CD8-positive, alpha-beta T cell (primary cell): ENCODE measurements at regions of chr22 and their contacts with region 1.

Region 1: DNA sequence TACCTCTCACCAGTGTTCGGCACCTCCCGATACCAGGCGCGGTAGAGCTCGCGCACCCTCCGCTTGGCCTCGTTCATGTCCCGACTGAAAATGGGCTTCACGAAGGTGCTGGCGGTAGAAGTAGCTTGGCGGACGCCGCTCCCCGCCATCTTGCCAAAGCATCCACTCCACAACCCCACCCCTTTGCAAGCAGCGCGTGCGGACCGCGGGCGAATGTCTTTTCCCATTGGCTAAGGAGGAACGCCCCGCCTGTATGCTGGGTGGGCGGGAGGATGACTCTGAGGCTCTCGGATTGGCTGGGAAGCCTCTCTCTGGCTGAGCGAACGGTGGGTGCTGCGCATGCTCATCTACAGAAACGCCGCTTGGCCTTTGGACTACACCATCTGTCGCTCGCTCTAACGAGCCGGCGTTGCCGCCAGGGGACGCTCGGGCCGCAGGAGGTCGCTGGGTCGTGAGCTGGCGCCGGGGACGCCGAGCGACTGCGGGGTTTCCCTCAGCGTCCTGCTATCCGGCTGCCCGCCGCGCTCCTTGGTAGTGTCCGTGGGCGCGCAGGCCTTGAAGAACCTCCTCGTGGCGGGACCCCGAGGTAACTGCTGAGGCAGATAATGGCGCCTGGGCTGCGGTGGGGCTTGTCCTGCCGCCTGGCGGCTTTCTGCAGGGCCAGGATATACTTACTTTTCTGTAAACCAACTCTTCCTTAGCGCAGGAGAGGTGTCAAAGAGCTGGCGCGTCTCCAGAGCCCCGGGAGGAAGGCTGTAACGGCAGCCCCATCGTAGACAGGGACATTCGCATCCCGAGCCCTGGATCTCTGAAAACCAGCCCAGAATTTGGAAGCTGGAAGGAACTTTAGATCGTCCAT is at the start of gene NDUFA6:
- DNase-seq: peak; percentile 95 to 99 (median 97)
- ATAC-seq: peak; percentile 92
- H3K4me3 ChIP-seq: peak within 1 kb of the TSS; percentile 73 to 96
- H3K4me3 Mint-ChIP-seq: peak within 1 kb of the TSS; percentile 99
- H3K27ac ChIP-seq: peak within 1 kb of the TSS; percentile 94 to 95
- H3K27ac Mint-ChIP-seq: peak within 1 kb of the TSS; percentile 100
- H3K4me1 ChIP-seq: peaks cover 25% of the 10 kb centered on the region
- H3K4me1 Mint-ChIP-seq: peaks cover 43% of the 10 kb centered on the region
- H3K27me3 ChIP-seq: no peaks in the 10 kb centered on the region
- H3K27me3 Mint-ChIP-seq: no peaks in the 10 kb centered on the region
- CTCF ChIP-seq: peak; percentile 87
- total RNA-seq, gene NDUFA6: 55.5 to 59.7 TPM

Region 2: GRCh38 chr22:41998361-41999275 is 92.2 kb before region 1 on chr22 and contains the start of gene WBP2NL:
- CTCF ChIA-PET with region 1: no interaction called
- POLR2A ChIA-PET with region 1: no interaction called
- intact Hi-C with region 1: loop called in 1 of 2 experiments (anchors 2 kb)
- DNase-seq: peak; percentile 77 to 95 (median 88)
- ATAC-seq: peak; percentile 95
- H3K4me3 ChIP-seq: peak within 1 kb of the TSS; percentile 70 to 76
- H3K4me3 Mint-ChIP-seq: peak within 1 kb of the TSS; percentile 97
- H3K27ac ChIP-seq: peak within 1 kb of the TSS; percentile 43 to 60
- H3K27ac Mint-ChIP-seq: peak within 1 kb of the TSS; percentile 97
- H3K4me1 ChIP-seq: peaks cover 13% of the 10 kb centered on the region
- H3K4me1 Mint-ChIP-seq: peaks cover 16% of the 10 kb centered on the region
- H3K27me3 ChIP-seq: no peaks in the 10 kb centered on the region
- H3K27me3 Mint-ChIP-seq: peaks cover 4% of the 10 kb centered on the region
- CTCF ChIP-seq: no peak
- total RNA-seq, gene WBP2NL: 0.28 to 0.60 TPM

Region 3: GRCh38 chr22:42101199-42101598 is 10.4 kb after region 1 on chr22:
- CTCF ChIA-PET with region 1: interaction called, 10 read pairs
- POLR2A ChIA-PET with region 1: interaction called, 3 read pairs
- intact Hi-C with region 1: no loop called
- DNase-seq: no peak
- ATAC-seq: no peak
- H3K4me3 ChIP-seq: no peak overlapping the region
- H3K4me3 Mint-ChIP-seq: no peak overlapping the region
- H3K27ac ChIP-seq: no peak overlapping the region
- H3K27ac Mint-ChIP-seq: no peak overlapping the region
- H3K4me1 ChIP-seq: no peaks in the 10 kb centered on the region
- H3K4me1 Mint-ChIP-seq: peaks cover 3% of the 10 kb centered on the region
- H3K27me3 ChIP-seq: no peaks in the 10 kb centered on the region
- H3K27me3 Mint-ChIP-seq: no peaks in the 10 kb centered on the region
- CTCF ChIP-seq: no peak

Region 4: DNA sequence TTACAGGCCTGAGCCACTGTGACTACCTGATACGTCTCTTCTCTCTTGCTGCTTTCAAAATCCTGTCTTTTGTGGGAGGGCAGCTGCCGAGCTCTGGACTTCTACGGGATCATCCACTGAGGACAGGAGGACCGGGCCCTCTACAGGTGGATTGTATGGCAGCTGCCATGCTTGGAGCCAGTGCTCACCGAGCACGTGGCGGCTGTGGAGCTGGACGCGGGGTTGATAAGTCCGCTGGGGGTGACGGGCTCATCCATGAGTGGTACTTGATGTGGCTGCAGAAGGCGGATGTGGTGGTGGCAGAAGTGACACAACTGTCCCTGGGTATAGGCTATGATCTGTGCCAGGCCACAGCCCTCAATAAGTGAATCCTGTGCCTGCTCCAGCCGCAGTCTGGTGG is 41.6 kb after region 1 on chr22:
- CTCF ChIA-PET with region 1: no interaction called
- POLR2A ChIA-PET with region 1: no interaction called
- intact Hi-C with region 1: no loop called
- DNase-seq: no peak
- ATAC-seq: no peak
- H3K4me3 ChIP-seq: no peak overlapping the region
- H3K4me3 Mint-ChIP-seq: no peak overlapping the region
- H3K27ac ChIP-seq: no peak overlapping the region
- H3K27ac Mint-ChIP-seq: no peak overlapping the region
- H3K4me1 ChIP-seq: no peaks in the 10 kb centered on the region
- H3K4me1 Mint-ChIP-seq: no peaks in the 10 kb centered on the region
- H3K27me3 ChIP-seq: no peaks in the 10 kb centered on the region
- H3K27me3 Mint-ChIP-seq: no peaks in the 10 kb centered on the region
- CTCF ChIP-seq: no peak

Region 5: GRCh38 chr22:42169055-42169469 is 78.2 kb after region 1 on chr22:
- CTCF ChIA-PET with region 1: interaction called, 4 read pairs
- POLR2A ChIA-PET with region 1: interaction called, 4 read pairs
- intact Hi-C with region 1: loop called (anchors 2 to 5 kb)
- DNase-seq: peak; percentile 51 to 82 (median 74)
- ATAC-seq: peak; percentile 95
- H3K4me3 ChIP-seq: no peak overlapping the region
- H3K4me3 Mint-ChIP-seq: no peak overlapping the region
- H3K27ac ChIP-seq: no peak overlapping the region
- H3K27ac Mint-ChIP-seq: no peak overlapping the region
- H3K4me1 ChIP-seq: peaks cover 3% of the 10 kb centered on the region
- H3K4me1 Mint-ChIP-seq: peaks cover 36% of the 10 kb centered on the region
- H3K27me3 ChIP-seq: no peaks in the 10 kb centered on the region
- H3K27me3 Mint-ChIP-seq: no peaks in the 10 kb centered on the region
- CTCF ChIP-seq: peak; percentile 94

Region 6: GRCh38 chr22:42369245-42370041 is 278.6 kb after region 1 on chr22:
- CTCF ChIA-PET with region 1: interaction called, 4 read pairs
- POLR2A ChIA-PET with region 1: no interaction called
- intact Hi-C with region 1: loop called in 1 of 2 experiments (anchors 1 kb)
- DNase-seq: peak; percentile 49 to 91 (median 82)
- ATAC-seq: peak; percentile 97
- H3K4me3 ChIP-seq: peak overlapping the region; percentile 60 to 86
- H3K4me3 Mint-ChIP-seq: peak overlapping the region; percentile 85
- H3K27ac ChIP-seq: no peak overlapping the region
- H3K27ac Mint-ChIP-seq: peak overlapping the region; percentile 9
- H3K4me1 ChIP-seq: peaks cover 18% of the 10 kb centered on the region
- H3K4me1 Mint-ChIP-seq: peaks cover 19% of the 10 kb centered on the region
- H3K27me3 ChIP-seq: peaks cover 9 to 24% of the 10 kb centered on the region in 2 experiments
- H3K27me3 Mint-ChIP-seq: peaks cover 23% of the 10 kb centered on the region
- CTCF ChIP-seq: no peak

Region 7: GRCh38 chr22:42614312-42615091 is 523.7 kb after region 1 on chr22 and contains the start of gene POLDIP3:
- CTCF ChIA-PET with region 1: no interaction called
- POLR2A ChIA-PET with region 1: interaction called, 3 read pairs
- intact Hi-C with region 1: loop called (anchors 1 to 10 kb)
- DNase-seq: peak; percentile 97 to 99 (median 99)
- ATAC-seq: peak; percentile 69
- H3K4me3 ChIP-seq: peak within 1 kb of the TSS; percentile 69 to 86
- H3K4me3 Mint-ChIP-seq: peak within 1 kb of the TSS; percentile 97
- H3K27ac ChIP-seq: peak within 1 kb of the TSS; percentile 85 to 97
- H3K27ac Mint-ChIP-seq: peak within 1 kb of the TSS; percentile 100
- H3K4me1 ChIP-seq: peaks cover 50% of the 10 kb centered on the region
- H3K4me1 Mint-ChIP-seq: peaks cover 52% of the 10 kb centered on the region
- H3K27me3 ChIP-seq: no peaks in the 10 kb centered on the region
- H3K27me3 Mint-ChIP-seq: no peaks in the 10 kb centered on the region
- CTCF ChIP-seq: no peak
- total RNA-seq, gene POLDIP3: 96.4 to 103 TPM